ENCODE measurements at regions of chr2 and their contacts with region 1.

Region 1: GRCh38 chr2:39227628-39228412 is 15.9 kb downstream of the CDKL4 start:
- DNase-seq: peak; percentile 91
- ATAC-seq: peak; percentile 82
- H3K4me3 Mint-ChIP-seq: peak overlapping the region; percentile 56
- H3K27ac Mint-ChIP-seq: peak overlapping the region; percentile 89
- H3K4me1 Mint-ChIP-seq: peaks cover 41% of the 10 kb centered on the region
- H3K27me3 Mint-ChIP-seq: no peaks in the 10 kb centered on the region
- CTCF ChIP-seq: peak; percentile 92

Region 2: DNA sequence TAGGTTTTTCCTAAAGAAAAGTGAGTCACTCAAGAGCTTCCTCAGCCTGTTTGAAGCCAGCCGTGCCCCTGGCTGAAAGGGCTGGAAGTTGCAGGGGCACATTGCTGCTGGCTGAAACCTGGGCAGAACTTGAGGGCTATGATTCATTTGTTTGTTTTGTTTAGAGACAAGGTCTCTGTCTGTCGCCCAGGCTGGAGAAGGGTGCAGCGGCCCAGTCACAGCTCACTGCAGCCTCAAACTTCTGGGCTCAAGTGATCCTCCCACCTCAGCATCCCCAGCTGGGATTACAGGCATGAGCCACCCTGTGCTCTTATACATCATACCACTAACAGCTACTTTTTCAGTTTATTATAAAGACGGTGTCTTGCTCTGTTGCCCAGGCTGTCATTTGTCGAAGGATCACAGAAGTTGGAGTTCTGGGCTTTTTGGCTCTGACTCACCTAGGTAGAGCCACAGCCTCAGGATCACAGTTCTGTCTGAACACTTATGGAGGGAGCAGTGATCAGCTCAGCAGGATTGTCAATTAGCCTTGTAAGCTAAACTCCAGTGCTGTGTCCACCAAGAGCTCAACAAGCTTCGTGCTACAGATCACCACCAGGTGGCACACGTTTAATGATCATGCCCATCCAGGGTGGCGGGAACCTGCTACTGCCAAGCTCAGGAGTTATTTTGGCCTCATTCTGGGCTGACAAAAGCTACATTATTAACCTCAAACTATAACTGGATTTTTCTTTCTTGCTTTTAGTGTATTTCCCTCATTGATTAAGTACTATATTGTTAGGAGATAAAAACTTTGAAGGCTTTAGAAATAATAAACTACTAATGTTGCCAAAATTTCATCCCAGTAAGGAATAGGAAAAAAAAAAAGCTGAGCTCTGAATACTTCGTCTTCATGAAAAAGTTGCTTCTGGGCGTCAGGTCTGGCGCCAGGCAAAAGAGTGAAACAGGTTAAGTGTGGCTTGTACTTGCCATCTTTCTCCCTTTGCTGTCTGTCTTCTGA is 280.3 kb before region 1 on chr2:
- CTCF ChIA-PET with region 1: interaction called, 210 read pairs
- POLR2A ChIA-PET with region 1: no interaction called
- intact Hi-C with region 1: loop called (anchors 1 kb)
- DNase-seq: peak; percentile 89
- ATAC-seq: peak; percentile 87
- H3K4me3 Mint-ChIP-seq: no peak overlapping the region
- H3K27ac Mint-ChIP-seq: no peak overlapping the region
- H3K4me1 Mint-ChIP-seq: no peaks in the 10 kb centered on the region
- H3K27me3 Mint-ChIP-seq: no peaks in the 10 kb centered on the region
- CTCF ChIP-seq: peak; percentile 76

Region 3: GRCh38 chr2:39059366-39059952 is 168.4 kb before region 1 on chr2:
- CTCF ChIA-PET with region 1: interaction called, 326 read pairs
- POLR2A ChIA-PET with region 1: no interaction called
- intact Hi-C with region 1: loop called (anchors 1 kb)
- DNase-seq: no peak
- ATAC-seq: no peak
- H3K4me3 Mint-ChIP-seq: no peak overlapping the region
- H3K27ac Mint-ChIP-seq: no peak overlapping the region
- H3K4me1 Mint-ChIP-seq: peaks cover 12% of the 10 kb centered on the region
- H3K27me3 Mint-ChIP-seq: no peaks in the 10 kb centered on the region
- CTCF ChIP-seq: peak; percentile 82

Region 4: DNA sequence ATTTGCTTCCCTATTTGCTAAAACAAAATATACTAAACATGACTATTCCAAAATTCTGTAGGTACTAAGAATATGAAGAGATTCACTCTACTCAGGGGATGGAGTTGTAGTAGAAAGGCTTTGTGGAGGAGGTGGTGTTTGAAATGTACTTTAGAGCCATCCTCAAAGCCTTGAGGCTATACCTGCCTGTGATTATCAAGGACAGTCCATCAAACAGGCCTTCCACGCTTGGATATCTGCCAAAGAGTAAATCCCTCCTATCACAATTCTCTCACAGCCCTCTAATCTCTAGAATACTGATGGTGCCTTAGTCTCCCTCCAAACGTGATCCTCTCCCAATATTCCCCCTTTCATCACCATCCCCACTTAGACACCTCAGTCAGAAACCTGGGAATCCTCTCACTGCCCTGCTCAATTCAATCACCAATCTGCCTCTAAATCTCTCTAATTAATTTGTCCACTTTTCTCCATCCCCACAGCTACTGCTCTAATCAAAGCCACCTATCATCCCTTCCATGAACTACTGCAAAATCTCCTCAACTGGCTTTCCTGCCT is 120.0 kb before region 1 on chr2:
- CTCF ChIA-PET with region 1: interaction called, 24 read pairs
- POLR2A ChIA-PET with region 1: interaction called, 4 read pairs
- intact Hi-C with region 1: no loop called
- DNase-seq: no peak
- ATAC-seq: no peak
- H3K4me3 Mint-ChIP-seq: no peak overlapping the region
- H3K27ac Mint-ChIP-seq: peak overlapping the region; percentile 37
- H3K4me1 Mint-ChIP-seq: peaks cover 53% of the 10 kb centered on the region
- H3K27me3 Mint-ChIP-seq: no peaks in the 10 kb centered on the region
- CTCF ChIP-seq: no peak

Region 5: DNA sequence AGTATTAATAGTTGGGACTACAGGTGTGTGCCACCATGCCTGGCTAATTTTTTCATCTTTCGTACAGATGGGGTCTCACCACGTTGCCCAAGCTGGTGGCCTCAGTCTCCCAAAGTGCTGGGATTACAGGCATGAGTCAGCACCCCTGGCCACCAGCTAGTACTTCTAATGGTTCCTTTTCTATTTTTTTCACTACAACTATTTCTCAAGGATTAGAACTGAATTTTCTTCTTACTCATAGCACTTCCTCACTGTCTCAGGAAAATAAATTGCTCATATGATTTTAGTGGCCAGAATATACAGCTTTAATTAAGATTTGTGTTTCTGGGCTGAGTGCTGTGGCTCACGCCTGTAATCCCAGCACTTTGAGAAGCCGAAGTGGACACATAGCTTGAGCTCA is 63.7 kb before region 1 on chr2:
- CTCF ChIA-PET with region 1: interaction called, 16 read pairs
- POLR2A ChIA-PET with region 1: no interaction called
- intact Hi-C with region 1: no loop called
- DNase-seq: no peak
- ATAC-seq: no peak
- H3K4me3 Mint-ChIP-seq: no peak overlapping the region
- H3K27ac Mint-ChIP-seq: no peak overlapping the region
- H3K4me1 Mint-ChIP-seq: peaks cover 9% of the 10 kb centered on the region
- H3K27me3 Mint-ChIP-seq: no peaks in the 10 kb centered on the region
- CTCF ChIP-seq: no peak

Region 6: DNA sequence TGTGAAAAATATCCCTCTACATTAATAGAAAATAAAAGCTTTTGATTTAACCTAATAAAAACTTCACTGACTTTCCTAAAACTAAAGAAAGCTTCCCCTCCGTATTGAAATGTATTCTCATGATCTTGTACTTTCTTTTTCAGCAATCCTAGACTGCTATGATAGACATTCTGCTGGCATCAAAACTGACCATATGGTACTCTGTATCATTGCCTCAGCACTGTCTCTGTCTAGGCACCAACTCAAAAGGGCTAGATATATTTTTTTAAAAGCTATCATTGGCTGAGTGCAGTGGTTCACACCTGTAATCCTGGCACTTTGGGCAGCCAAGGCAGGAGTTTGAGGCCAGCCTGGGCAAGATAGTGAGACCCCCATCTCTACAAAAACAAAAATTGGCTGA is 17.0 kb before region 1 on chr2:
- CTCF ChIA-PET with region 1: interaction called, 26 read pairs
- POLR2A ChIA-PET with region 1: interaction called, 8 read pairs
- intact Hi-C with region 1: no loop called
- DNase-seq: no peak
- ATAC-seq: no peak
- H3K4me3 Mint-ChIP-seq: no peak overlapping the region
- H3K27ac Mint-ChIP-seq: no peak overlapping the region
- H3K4me1 Mint-ChIP-seq: peaks cover 25% of the 10 kb centered on the region
- H3K27me3 Mint-ChIP-seq: no peaks in the 10 kb centered on the region
- CTCF ChIP-seq: no peak

Measured in activated CD8-positive, alpha-beta T cell treated with anti-CD3 and anti-CD28 coated beads for 36 hours (primary cell).